CD14-positive monocyte (primary cell): ENCODE measurements at regions of chr11 and their contacts with region 1.

Region 1: GRCh38 chr11:62421996-62422395 is 3.2 kb downstream of the SCGB1A1 start:
- DNase-seq: no peak
- H3K4me3 ChIP-seq: no peak overlapping the region
- H3K4me3 Mint-ChIP-seq: peak overlapping the region in 1 of 2 donors; percentile 35
- H3K27ac ChIP-seq: no peak overlapping the region
- H3K27ac Mint-ChIP-seq: peak overlapping the region in 2 of 7 donors; percentile 15 to 54
- H3K4me1 ChIP-seq: peaks cover 34 to 41% of the 10 kb centered on the region in 2 donors
- H3K4me1 Mint-ChIP-seq: peaks cover 56% of the 10 kb centered on the region
- H3K27me3 ChIP-seq: no peaks in the 10 kb centered on the region
- H3K27me3 Mint-ChIP-seq: peaks cover 0 to 5% (median 2%) of the 10 kb centered on the region in 3 donors
- CTCF ChIP-seq: no peak

Region 2: GRCh38 chr11:62295504-62295903 is 126.5 kb before region 1 on chr11:
- intact Hi-C with region 1: no loop called
- DNase-seq: no peak
- H3K4me3 ChIP-seq: no peak overlapping the region
- H3K4me3 Mint-ChIP-seq: peak overlapping the region in 1 of 2 donors; percentile 5
- H3K27ac ChIP-seq: no peak overlapping the region
- H3K27ac Mint-ChIP-seq: no peak overlapping the region
- H3K4me1 ChIP-seq: no peaks in the 10 kb centered on the region
- H3K4me1 Mint-ChIP-seq: no peaks in the 10 kb centered on the region
- H3K27me3 ChIP-seq: peaks cover 0 to 1% of the 10 kb centered on the region in 2 donors
- H3K27me3 Mint-ChIP-seq: peaks cover 10 to 19% (median 13%) of the 10 kb centered on the region in 3 donors
- CTCF ChIP-seq: no peak

Region 3: GRCh38 chr11:62458212-62459002 is 36.4 kb after region 1 on chr11:
- intact Hi-C with region 1: no loop called
- DNase-seq: peak in 1 of 3 donors; percentile 16
- H3K4me3 ChIP-seq: peak overlapping the region in 1 of 3 experiments; percentile 41
- H3K4me3 Mint-ChIP-seq: peak overlapping the region in 1 of 2 donors; percentile 78
- H3K27ac ChIP-seq: peak overlapping the region in 1 of 2 donors; percentile 81
- H3K27ac Mint-ChIP-seq: peak overlapping the region; percentile 46 to 89 (median 80)
- H3K4me1 ChIP-seq: peaks cover 44 to 73% of the 10 kb centered on the region in 2 donors
- H3K4me1 Mint-ChIP-seq: peaks cover 50% of the 10 kb centered on the region
- H3K27me3 ChIP-seq: no peaks in the 10 kb centered on the region
- H3K27me3 Mint-ChIP-seq: peaks cover 0 to 7% (median 3%) of the 10 kb centered on the region in 3 donors
- CTCF ChIP-seq: no peak

Region 4: DNA sequence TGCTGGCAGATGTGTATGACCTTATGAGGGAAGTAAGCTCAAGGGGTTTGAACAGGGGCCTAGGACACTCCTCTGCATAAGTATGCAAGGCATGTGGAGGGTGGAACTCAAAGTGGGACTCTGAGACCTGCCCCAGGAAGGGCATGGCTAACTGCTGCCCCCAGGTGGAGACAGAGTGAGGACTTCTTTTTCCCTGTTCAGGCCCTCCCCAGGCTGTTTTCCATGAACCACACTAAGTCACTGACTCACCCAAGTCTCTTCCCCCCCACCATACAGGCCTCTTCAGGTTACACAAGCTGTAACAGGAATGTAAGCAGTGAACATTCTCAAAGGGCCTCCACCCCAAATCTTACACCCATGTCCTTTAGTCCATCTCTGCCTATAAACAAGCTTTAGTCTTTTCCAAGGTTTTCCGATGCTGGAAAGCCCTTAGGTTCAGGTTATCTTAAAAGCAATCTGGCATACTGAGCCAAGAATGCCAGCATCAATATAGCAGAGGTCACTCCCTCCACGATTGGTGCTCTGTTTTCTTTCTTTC is 138.6 kb after region 1 on chr11:
- intact Hi-C with region 1: loop called in 1 of 2 experiments (anchors 5 kb)
- DNase-seq: peak; percentile 88 to 94 (median 90)
- H3K4me3 ChIP-seq: no peak overlapping the region
- H3K4me3 Mint-ChIP-seq: no peak overlapping the region
- H3K27ac ChIP-seq: peak overlapping the region; percentile 10 to 56
- H3K27ac Mint-ChIP-seq: peak overlapping the region; percentile 70 to 87 (median 81)
- H3K4me1 ChIP-seq: peaks cover 36 to 44% of the 10 kb centered on the region in 2 donors
- H3K4me1 Mint-ChIP-seq: peaks cover 37% of the 10 kb centered on the region
- H3K27me3 ChIP-seq: no peaks in the 10 kb centered on the region
- H3K27me3 Mint-ChIP-seq: peaks cover 0 to 2% (median 2%) of the 10 kb centered on the region in 3 donors
- CTCF ChIP-seq: peak; percentile 78